ENCODE measurements at regions of chr18 and their contacts with region 1.

Region 1: DNA sequence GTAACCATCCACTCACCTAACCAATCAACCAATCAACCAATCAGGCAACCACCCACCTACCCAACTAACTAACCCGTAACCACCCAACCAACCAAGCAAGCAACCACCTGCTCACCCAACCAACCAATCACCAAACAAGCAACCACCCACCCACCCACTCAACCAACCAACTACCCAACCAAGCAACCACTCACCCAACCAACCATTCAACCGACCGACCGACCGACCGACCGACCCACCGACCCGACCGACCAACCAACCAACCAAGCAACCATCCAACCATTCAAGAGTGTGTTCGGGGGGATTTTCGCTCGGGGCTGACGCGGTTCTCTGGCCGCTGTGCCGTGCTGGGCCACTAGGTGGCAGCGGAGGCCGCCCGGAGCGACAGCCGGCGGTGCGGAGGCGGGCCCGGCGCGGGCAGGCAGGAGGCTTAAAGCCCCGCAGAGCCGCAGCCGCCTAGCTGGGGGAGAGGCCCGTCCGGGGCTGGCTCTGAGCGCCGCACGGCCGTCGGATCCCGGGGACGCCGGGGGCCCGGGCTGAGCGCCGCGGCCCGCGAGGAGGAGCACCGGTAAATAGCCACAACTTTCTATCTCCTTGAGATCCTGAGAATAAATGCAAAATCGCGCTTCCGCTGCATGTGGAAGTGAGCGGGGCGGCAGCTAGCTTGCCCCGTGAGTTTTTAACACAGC is at the start of gene MC5R:
- DNase-seq: peak; percentile 49 to 91 (median 56)
- ATAC-seq: peak; percentile 100
- H3K4me3 ChIP-seq: peak within 1 kb of the TSS; percentile 24 to 25
- H3K27ac ChIP-seq: no peak within 1 kb of the TSS
- H3K4me1 ChIP-seq: peaks cover 0 to 5% of the 10 kb centered on the region in 2 donors
- H3K27me3 ChIP-seq: peaks cover 10 to 60% of the 10 kb centered on the region in 2 donors
- CTCF ChIP-seq: peak; percentile 68 to 78
- polyA plus RNA-seq, gene MC5R: 0.13 to 0.16 TPM in 2 of 6 donors, not detected in the others

Region 2: GRCh38 chr18:14086458-14087231 is 262.8 kb after region 1 on chr18:
- intact Hi-C with region 1: loop called in 1 of 2 experiments (anchors 10 kb)
- DNase-seq: peak in 2 of 4 donors; percentile 37 to 66
- ATAC-seq: peak; percentile 84
- H3K4me3 ChIP-seq: no peak overlapping the region
- H3K27ac ChIP-seq: no peak overlapping the region
- H3K4me1 ChIP-seq: no peaks in the 10 kb centered on the region
- H3K27me3 ChIP-seq: no peaks in the 10 kb centered on the region
- CTCF ChIP-seq: peak; percentile 26 to 47